Colonic mucosa (tissue), 4 donors: ENCODE measurements at regions of chr10 and their contacts with region 1.

Region 1: GRCh38 chr10:26334932-26335573 is 103.1 kb upstream of the APBB1IP start:
- DNase-seq: peak; percentile 45
- H3K4me3 ChIP-seq: peak overlapping the region; percentile 17
- H3K27ac ChIP-seq: no peak overlapping the region
- H3K4me1 ChIP-seq: no peaks in the 10 kb centered on the region
- H3K27me3 ChIP-seq: no peaks in the 10 kb centered on the region
- CTCF ChIP-seq: peak; percentile 68

Region 2: GRCh38 chr10:26044141-26044749 is 290.8 kb before region 1 on chr10:
- intact Hi-C with region 1: no loop called
- DNase-seq: no peak
- H3K4me3 ChIP-seq: no peak overlapping the region
- H3K27ac ChIP-seq: no peak overlapping the region
- H3K4me1 ChIP-seq: no peaks in the 10 kb centered on the region
- H3K27me3 ChIP-seq: no peaks in the 10 kb centered on the region
- CTCF ChIP-seq: no peak

Region 3: DNA sequence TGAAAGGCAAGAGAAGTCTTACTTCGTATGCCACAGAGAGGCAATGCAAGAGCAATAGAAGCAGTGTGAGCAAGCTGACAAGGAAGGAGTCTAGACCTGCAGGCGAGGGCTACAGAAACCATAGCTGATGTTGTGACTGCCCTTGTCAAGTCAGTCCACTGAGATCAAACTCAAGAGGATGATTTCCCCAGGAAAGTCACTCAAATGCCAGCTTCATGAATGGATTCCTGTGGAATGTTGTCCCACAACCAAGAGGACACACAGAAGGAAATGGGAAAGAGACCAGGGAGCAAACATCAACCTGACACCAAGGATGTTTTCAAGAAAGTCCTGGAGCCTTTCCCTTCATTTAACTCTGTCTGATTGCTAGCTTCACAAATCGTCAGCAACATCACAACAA is 196.4 kb before region 1 on chr10:
- intact Hi-C with region 1: no loop called
- DNase-seq: no peak
- H3K4me3 ChIP-seq: no peak overlapping the region
- H3K27ac ChIP-seq: no peak overlapping the region
- H3K4me1 ChIP-seq: no peaks in the 10 kb centered on the region
- H3K27me3 ChIP-seq: no peaks in the 10 kb centered on the region
- CTCF ChIP-seq: no peak

Region 4: DNA sequence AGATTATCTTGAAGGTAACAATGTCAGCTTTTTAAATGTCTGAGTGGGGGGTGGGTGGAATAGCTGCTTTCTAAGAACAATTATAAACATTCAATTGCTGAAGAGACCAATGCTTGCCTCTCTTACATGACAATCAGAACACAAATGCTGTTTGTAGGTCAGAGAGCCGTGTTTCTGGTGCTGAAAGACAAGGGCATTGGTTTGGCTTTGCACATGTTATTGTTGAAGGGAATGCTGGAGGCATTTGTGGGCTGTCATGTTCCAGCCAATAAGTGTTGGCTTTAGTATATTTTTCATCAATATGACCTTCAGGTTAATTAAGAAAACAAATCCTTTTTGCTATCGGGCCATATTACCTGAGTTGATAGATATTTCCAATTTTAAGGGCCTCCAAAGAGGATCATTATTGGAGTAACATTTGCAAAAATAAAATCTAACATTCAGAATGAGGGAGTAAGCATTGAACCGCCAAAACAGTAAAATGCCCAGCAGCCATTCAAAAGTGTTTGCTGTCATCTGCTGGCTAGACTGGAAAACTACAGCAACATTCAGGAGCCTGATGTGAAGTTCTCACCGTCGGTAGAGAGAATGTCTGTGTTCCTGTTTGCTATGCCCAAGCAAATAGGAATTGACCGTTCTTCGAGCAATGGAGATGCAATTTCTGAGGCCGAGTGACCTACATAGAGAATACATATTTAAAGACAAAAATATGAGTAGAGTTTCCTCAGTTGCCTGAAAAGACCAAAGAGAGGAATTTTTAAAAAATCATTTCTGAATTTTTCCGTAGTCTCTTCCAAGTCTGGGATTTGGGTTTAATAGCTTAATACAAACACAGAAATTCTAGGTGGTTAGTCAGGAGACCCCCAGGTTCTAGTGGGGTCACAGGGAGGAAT is 221.9 kb after region 1 on chr10:
- intact Hi-C with region 1: loop called (anchors 5 kb)
- DNase-seq: no peak
- H3K4me3 ChIP-seq: no peak overlapping the region
- H3K27ac ChIP-seq: no peak overlapping the region
- H3K4me1 ChIP-seq: no peaks in the 10 kb centered on the region
- H3K27me3 ChIP-seq: no peaks in the 10 kb centered on the region
- CTCF ChIP-seq: peak; percentile 80

Region 5: GRCh38 chr10:26642896-26643653 is 308.0 kb after region 1 on chr10:
- intact Hi-C with region 1: no loop called
- DNase-seq: no peak
- H3K4me3 ChIP-seq: no peak overlapping the region
- H3K27ac ChIP-seq: no peak overlapping the region
- H3K4me1 ChIP-seq: no peaks in the 10 kb centered on the region
- H3K27me3 ChIP-seq: no peaks in the 10 kb centered on the region
- CTCF ChIP-seq: no peak

Region 6: GRCh38 chr10:26881600-26882331 is 546.7 kb after region 1 on chr10:
- intact Hi-C with region 1: loop called (anchors 10 kb)
- DNase-seq: no peak
- H3K4me3 ChIP-seq: no peak overlapping the region
- H3K27ac ChIP-seq: no peak overlapping the region
- H3K4me1 ChIP-seq: no peaks in the 10 kb centered on the region
- H3K27me3 ChIP-seq: no peaks in the 10 kb centered on the region
- CTCF ChIP-seq: peak; percentile 35

Region 7: GRCh38 chr10:27355918-27356573 is 1021.0 kb after region 1 on chr10:
- intact Hi-C with region 1: loop called (anchors 10 kb)
- DNase-seq: no peak
- H3K4me3 ChIP-seq: no peak overlapping the region
- H3K27ac ChIP-seq: no peak overlapping the region
- H3K4me1 ChIP-seq: no peaks in the 10 kb centered on the region
- H3K27me3 ChIP-seq: no peaks in the 10 kb centered on the region
- CTCF ChIP-seq: no peak